RWPE1 (cell line): ENCODE measurements at regions of chr5 and their contacts with region 1.

Region 1: GRCh38 chr5:62584391-62584790 is 5.8 kb downstream of the LRRC70 start:
- DNase-seq: no peak
- H3K27ac ChIP-seq: no peak overlapping the region
- CTCF ChIP-seq: no peak

Region 2: DNA sequence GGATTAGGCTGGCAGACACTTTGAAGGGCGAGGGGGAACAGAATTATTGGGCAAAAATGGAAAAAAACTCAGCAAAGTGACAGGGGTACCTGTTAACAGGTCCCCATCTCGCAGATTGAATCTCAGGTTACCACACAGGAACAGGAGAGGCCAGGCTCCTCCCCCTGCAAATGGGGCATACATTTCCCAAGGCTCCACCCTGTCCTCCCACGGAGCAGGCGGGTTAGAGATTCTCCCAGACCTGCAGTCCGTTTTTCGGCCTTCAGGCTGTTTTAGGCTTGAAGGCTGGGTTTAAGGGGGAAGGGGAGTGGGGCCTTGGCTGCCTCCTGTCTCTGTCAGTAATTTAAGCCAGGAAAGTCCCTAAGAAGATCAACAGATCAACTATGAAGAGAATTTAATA is 36.9 kb after region 1 on chr5:
- CTCF ChIA-PET with region 1: no interaction called
- POLR2A ChIA-PET with region 1: interaction called, 11 read pairs
- DNase-seq: no peak
- H3K27ac ChIP-seq: no peak overlapping the region
- CTCF ChIP-seq: no peak

Region 3: DNA sequence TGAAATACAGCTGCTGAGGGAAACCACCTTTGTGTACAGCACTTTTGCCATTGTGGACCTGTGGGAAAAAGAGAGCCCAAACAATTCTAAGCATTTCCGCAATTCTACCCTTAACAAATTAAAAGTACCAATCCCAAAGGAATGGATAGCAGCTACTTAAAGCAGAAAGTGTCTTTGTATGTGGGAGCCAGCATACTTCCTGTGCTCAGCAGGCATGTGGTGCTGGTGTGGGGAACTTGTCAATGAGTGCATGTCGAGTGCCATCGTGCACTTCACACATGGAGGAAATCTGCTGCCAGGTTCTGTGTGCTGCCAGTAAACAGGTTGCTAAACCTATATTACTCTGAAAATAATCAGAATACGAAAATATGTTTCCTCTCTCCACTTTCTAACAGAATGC is 393.3 kb after region 1 on chr5:
- CTCF ChIA-PET with region 1: no interaction called
- POLR2A ChIA-PET with region 1: no interaction called
- DNase-seq: no peak
- H3K27ac ChIP-seq: no peak overlapping the region
- CTCF ChIP-seq: no peak